ENCODE measurements at regions of chr6 and their contacts with region 1.

Region 1: DNA sequence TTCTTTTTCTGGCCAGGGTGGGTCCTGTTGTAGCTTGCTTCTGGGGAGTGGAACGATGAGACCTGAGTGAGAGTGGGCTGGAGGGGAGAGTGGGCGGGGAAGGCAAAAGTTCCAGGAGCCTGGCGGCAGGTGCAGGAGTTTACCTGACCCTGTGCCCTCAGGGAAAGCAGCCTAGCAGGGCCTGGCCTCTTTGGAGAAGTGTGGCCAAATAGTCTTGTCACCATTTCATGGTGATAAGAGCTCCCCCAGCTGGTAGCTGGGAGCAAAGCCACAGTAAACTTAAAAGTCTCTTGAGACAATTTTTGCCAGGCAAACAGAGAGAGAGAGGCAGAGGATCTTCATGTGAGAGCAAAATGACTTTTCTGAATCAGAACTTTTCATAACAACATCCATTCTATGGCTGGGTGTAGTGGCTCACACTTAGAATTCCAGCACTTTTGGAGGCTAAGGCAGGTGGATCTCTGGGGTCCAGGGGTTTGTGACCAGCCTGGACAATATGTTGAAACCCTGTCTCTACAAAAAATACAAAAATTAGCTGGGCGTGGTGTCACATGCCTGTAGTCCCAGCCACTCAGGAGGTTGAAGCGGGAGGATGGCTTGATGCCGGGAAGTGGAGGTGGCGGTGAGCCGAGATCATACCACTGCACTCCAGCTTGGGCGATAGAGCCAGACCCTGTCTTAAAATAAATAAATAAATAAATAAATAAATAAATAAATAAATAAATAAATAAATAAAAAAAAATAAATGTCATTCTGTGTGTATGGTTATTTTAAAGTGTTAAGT is 161.8 kb upstream of the SCGN start:
- DNase-seq: peak; percentile 64
- ATAC-seq: peak; percentile 70
- H3K4me3 Mint-ChIP-seq: no peak overlapping the region
- H3K27ac Mint-ChIP-seq: peak overlapping the region; percentile 70
- H3K4me1 Mint-ChIP-seq: peaks cover 4% of the 10 kb centered on the region
- H3K27me3 Mint-ChIP-seq: no peaks in the 10 kb centered on the region

Region 2: GRCh38 chr6:25278914-25279747 is 211.1 kb before region 1 on chr6 and contains the start of gene CARMIL1:
- POLR2A ChIA-PET with region 1: interaction called, 13 read pairs
- DNase-seq: peak; percentile 82
- ATAC-seq: peak; percentile 87
- H3K4me3 Mint-ChIP-seq: peak within 1 kb of the TSS; percentile 84
- H3K27ac Mint-ChIP-seq: peak within 1 kb of the TSS; percentile 73
- H3K4me1 Mint-ChIP-seq: peaks cover 12% of the 10 kb centered on the region
- H3K27me3 Mint-ChIP-seq: peaks cover 3% of the 10 kb centered on the region
- total RNA-seq, gene CARMIL1: 6.0 to 6.8 TPM